Activated CD4-positive, alpha-beta memory T cell treated with anti-CD3 and anti-CD28 coated beads for 36 hours (primary cell): ENCODE measurements at regions of chr2 and their contacts with region 1.

Region 1: GRCh38 chr2:10493636-10494281 is 45.6 kb upstream of the ODC1 start:
- DNase-seq: peak; percentile 96
- H3K4me3 Mint-ChIP-seq: peak overlapping the region; percentile 21
- H3K27ac Mint-ChIP-seq: peak overlapping the region; percentile 83
- H3K4me1 Mint-ChIP-seq: peaks cover 41% of the 10 kb centered on the region
- H3K27me3 Mint-ChIP-seq: peaks cover 10% of the 10 kb centered on the region

Region 2: GRCh38 chr2:10538224-10538894 is 44.6 kb after region 1 on chr2:
- CTCF ChIA-PET with region 1: interaction called, 3 read pairs
- POLR2A ChIA-PET with region 1: no interaction called
- intact Hi-C with region 1: loop called (anchors 5 kb)
- DNase-seq: peak; percentile 40
- H3K4me3 Mint-ChIP-seq: no peak overlapping the region
- H3K27ac Mint-ChIP-seq: no peak overlapping the region
- H3K4me1 Mint-ChIP-seq: peaks cover 23% of the 10 kb centered on the region
- H3K27me3 Mint-ChIP-seq: peaks cover 3% of the 10 kb centered on the region

Region 3: GRCh38 chr2:10584796-10585475 is 91.2 kb after region 1 on chr2:
- CTCF ChIA-PET with region 1: no interaction called
- POLR2A ChIA-PET with region 1: no interaction called
- intact Hi-C with region 1: no loop called
- DNase-seq: no peak
- H3K4me3 Mint-ChIP-seq: no peak overlapping the region
- H3K27ac Mint-ChIP-seq: no peak overlapping the region
- H3K4me1 Mint-ChIP-seq: no peaks in the 10 kb centered on the region
- H3K27me3 Mint-ChIP-seq: no peaks in the 10 kb centered on the region